Endothelial cell of umbilical vein (primary cell): ENCODE measurements at regions of chr2 and their contacts with region 1.

Region 1: GRCh38 chr2:71460595-71461303 is 7.4 kb downstream of the DYSF start:
- DNase-seq: peak; percentile 72
- H3K4me3 ChIP-seq: no peak overlapping the region
- H3K27ac ChIP-seq: peak overlapping the region; percentile 36
- H3K4me1 ChIP-seq: peaks cover 55% of the 10 kb centered on the region
- H3K27me3 ChIP-seq: no peaks in the 10 kb centered on the region
- CTCF ChIP-seq: peak; percentile 55 to 72
- POLR2A ChIP-seq: no peak

Region 2: GRCh38 chr2:71331581-71332434 is 128.9 kb before region 1 on chr2 and contains the start of gene ZNF638:
- CTCF ChIA-PET with region 1: interaction called, 5 read pairs
- POLR2A ChIA-PET with region 1: no interaction called
- dilution Hi-C with region 1: no loop called
- intact Hi-C with region 1: loop called (anchors 5 kb)
- DNase-seq: peak; percentile 94
- H3K4me3 ChIP-seq: peak within 1 kb of the TSS; percentile 66 to 98 (median 81)
- H3K27ac ChIP-seq: peak within 1 kb of the TSS; percentile 70
- H3K4me1 ChIP-seq: peaks cover 14% of the 10 kb centered on the region
- H3K27me3 ChIP-seq: no peaks in the 10 kb centered on the region
- CTCF ChIP-seq: peak; percentile 81 to 84
- POLR2A ChIP-seq: peak; percentile 89
- total RNA-seq, gene ZNF638: 109 and 111 TPM in 2 replicates

Region 3: GRCh38 chr2:71447280-71447679 is 13.5 kb before region 1 on chr2:
- CTCF ChIA-PET with region 1: interaction called, 32 read pairs
- POLR2A ChIA-PET with region 1: no interaction called
- dilution Hi-C with region 1: no loop called
- intact Hi-C with region 1: no loop called
- DNase-seq: no peak
- H3K4me3 ChIP-seq: no peak overlapping the region
- H3K27ac ChIP-seq: no peak overlapping the region
- H3K4me1 ChIP-seq: peaks cover 2% of the 10 kb centered on the region
- H3K27me3 ChIP-seq: no peaks in the 10 kb centered on the region
- CTCF ChIP-seq: no peak
- POLR2A ChIP-seq: no peak

Region 4: DNA sequence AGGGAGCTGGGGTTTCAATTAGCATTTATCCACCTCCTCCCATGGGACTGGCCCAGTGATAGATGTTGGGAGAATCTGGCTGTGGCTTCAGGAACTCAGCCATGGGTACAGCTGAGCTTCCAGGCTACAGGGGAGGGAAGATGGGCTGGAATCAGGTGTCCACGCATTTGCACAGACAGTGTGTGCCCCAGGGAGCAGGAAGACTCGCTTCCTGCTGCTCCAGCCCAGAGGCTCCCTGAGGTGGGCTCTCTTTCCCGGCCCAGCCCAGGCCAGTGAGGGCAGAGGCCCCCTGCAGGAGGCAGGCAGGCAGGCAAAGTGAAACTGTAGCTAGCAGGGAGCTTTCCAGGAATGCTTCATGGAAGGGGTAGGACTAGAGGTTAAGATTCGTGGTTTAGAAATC is 21.3 kb after region 1 on chr2:
- CTCF ChIA-PET with region 1: interaction called, 12 read pairs
- POLR2A ChIA-PET with region 1: interaction called, 5 read pairs
- dilution Hi-C with region 1: no loop called
- intact Hi-C with region 1: no loop called
- DNase-seq: no peak
- H3K4me3 ChIP-seq: no peak overlapping the region
- H3K27ac ChIP-seq: no peak overlapping the region
- H3K4me1 ChIP-seq: no peaks in the 10 kb centered on the region
- H3K27me3 ChIP-seq: no peaks in the 10 kb centered on the region
- CTCF ChIP-seq: no peak
- POLR2A ChIP-seq: no peak

Region 5: GRCh38 chr2:71498261-71498701 is 37.5 kb after region 1 on chr2:
- CTCF ChIA-PET with region 1: interaction called, 670 read pairs
- POLR2A ChIA-PET with region 1: no interaction called
- dilution Hi-C with region 1: no loop called
- intact Hi-C with region 1: no loop called
- DNase-seq: peak; percentile 72
- H3K4me3 ChIP-seq: no peak overlapping the region
- H3K27ac ChIP-seq: peak overlapping the region; percentile 96
- H3K4me1 ChIP-seq: peaks cover 71% of the 10 kb centered on the region
- H3K27me3 ChIP-seq: no peaks in the 10 kb centered on the region
- CTCF ChIP-seq: no peak
- POLR2A ChIP-seq: no peak

Region 6: GRCh38 chr2:71510196-71510807 is 49.6 kb after region 1 on chr2:
- CTCF ChIA-PET with region 1: interaction called, 670 read pairs
- POLR2A ChIA-PET with region 1: interaction called, 3 read pairs
- dilution Hi-C with region 1: no loop called
- intact Hi-C with region 1: loop called (anchors 1 kb)
- DNase-seq: peak; percentile 63
- H3K4me3 ChIP-seq: no peak overlapping the region
- H3K27ac ChIP-seq: no peak overlapping the region
- H3K4me1 ChIP-seq: peaks cover 8% of the 10 kb centered on the region
- H3K27me3 ChIP-seq: no peaks in the 10 kb centered on the region
- CTCF ChIP-seq: peak; percentile 89 to 90
- POLR2A ChIP-seq: no peak

Region 7: GRCh38 chr2:71581026-71581425 is 120.3 kb after region 1 on chr2:
- CTCF ChIA-PET with region 1: no interaction called
- POLR2A ChIA-PET with region 1: no interaction called
- dilution Hi-C with region 1: no loop called
- intact Hi-C with region 1: no loop called
- DNase-seq: no peak
- H3K4me3 ChIP-seq: no peak overlapping the region
- H3K27ac ChIP-seq: no peak overlapping the region
- H3K4me1 ChIP-seq: no peaks in the 10 kb centered on the region
- H3K27me3 ChIP-seq: no peaks in the 10 kb centered on the region
- CTCF ChIP-seq: no peak
- POLR2A ChIP-seq: no peak